HepG2 (cell line): ENCODE measurements at regions of chr5 and their contacts with region 1.

Region 1: GRCh38 chr5:74640450-74640953 is at the start of gene ENC1:
- DNase-seq: peak; percentile 95
- ATAC-seq: peak; percentile 83
- H3K4me3 ChIP-seq: peak within 1 kb of the TSS; percentile 92 to 100 (median 99)
- H3K27ac ChIP-seq: peak within 1 kb of the TSS; percentile 83
- H3K4me1 ChIP-seq: peaks cover 43% of the 10 kb centered on the region
- H3K27me3 ChIP-seq: no peaks in the 10 kb centered on the region; a peak in 2 of 5 replicates
- CTCF ChIP-seq: peak; percentile 68
- EP300 ChIP-seq: peak in 1 of 2 experiments; percentile 60; a peak in 2 of 4 replicates
- POLR2A ChIP-seq: peak in 1 of 2 experiments; percentile 98; a peak in 2 of 4 replicates
- RAD21 ChIP-seq: peak; percentile 80
- total RNA-seq, gene ENC1: 63.8 and 69.9 TPM in 2 replicates

Region 2: GRCh38 chr5:74290633-74291241 is 349.8 kb before region 1 on chr5:
- CTCF ChIA-PET with region 1: no interaction called
- POLR2A ChIA-PET with region 1: no interaction called
- in situ Hi-C with region 1: no loop called
- intact Hi-C with region 1: loop called (anchors 2 kb)
- DNase-seq: peak; percentile 7
- ATAC-seq: peak; percentile 71
- H3K4me3 ChIP-seq: no peak overlapping the region
- H3K27ac ChIP-seq: no peak overlapping the region
- H3K4me1 ChIP-seq: no peaks in the 10 kb centered on the region
- H3K27me3 ChIP-seq: no peaks in the 10 kb centered on the region; a peak in 2 of 5 replicates
- CTCF ChIP-seq: peak; percentile 56
- EP300 ChIP-seq: no peak
- POLR2A ChIP-seq: no peak
- RAD21 ChIP-seq: no peak

Region 3: DNA sequence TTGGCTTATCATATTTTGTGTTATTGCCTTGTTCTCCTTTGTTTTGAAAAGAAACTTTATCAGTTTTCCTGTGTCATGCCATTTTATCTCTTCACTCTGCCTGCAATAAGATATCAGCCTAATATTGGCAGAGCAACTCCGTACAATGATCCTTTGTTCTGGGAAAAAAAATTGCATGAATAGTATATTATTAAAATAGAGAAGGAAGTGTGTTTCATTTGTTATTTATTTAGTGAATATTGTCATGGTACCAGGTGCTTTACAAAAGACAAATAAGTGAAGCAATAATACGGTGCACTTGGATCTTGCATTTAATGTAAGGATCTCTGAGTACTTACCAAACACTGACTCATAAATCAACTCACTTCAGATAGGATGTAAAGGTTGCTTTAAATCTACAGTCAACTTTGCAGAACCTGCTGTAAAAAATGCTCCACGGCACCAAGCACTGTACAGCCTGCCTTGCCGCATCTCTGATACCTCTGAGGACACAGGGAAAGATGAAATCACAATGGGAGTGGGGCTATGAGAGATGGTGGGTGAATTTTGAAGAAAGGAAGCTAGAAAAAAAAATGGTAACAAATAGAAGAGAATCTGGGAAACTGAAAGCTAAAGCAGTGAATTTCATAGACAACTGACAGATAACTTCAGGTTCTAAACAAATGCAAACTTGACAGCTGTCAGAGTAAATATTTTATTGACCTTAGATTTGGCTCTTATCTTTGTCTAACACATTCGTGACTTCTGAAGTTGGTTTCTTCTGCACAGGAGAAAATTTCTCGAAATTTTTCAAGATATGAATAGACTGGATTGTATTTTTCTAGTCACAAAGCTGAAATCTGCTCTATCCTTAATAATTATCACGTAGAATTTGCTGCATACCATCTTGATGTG is 232.1 kb before region 1 on chr5:
- CTCF ChIA-PET with region 1: no interaction called
- POLR2A ChIA-PET with region 1: interaction called, 12 read pairs
- in situ Hi-C with region 1: no loop called
- intact Hi-C with region 1: loop called (anchors 2 kb)
- DNase-seq: peak; percentile 96
- ATAC-seq: peak; percentile 96
- H3K4me3 ChIP-seq: peak overlapping the region in 2 of 3 experiments; percentile 35 to 38; a peak in 2 of 6 replicates
- H3K27ac ChIP-seq: peak overlapping the region; percentile 66
- H3K4me1 ChIP-seq: peaks cover 66% of the 10 kb centered on the region
- H3K27me3 ChIP-seq: no peaks in the 10 kb centered on the region
- CTCF ChIP-seq: no peak
- EP300 ChIP-seq: peak; percentile 87 to 92; a peak in 3 of 4 replicates
- POLR2A ChIP-seq: no peak
- RAD21 ChIP-seq: 0 out of 2 replicates have a peak, but pooled peaks have one; percentile 17

Region 4: GRCh38 chr5:74490811-74491210 is 149.7 kb before region 1 on chr5:
- CTCF ChIA-PET with region 1: no interaction called
- POLR2A ChIA-PET with region 1: no interaction called
- in situ Hi-C with region 1: no loop called
- intact Hi-C with region 1: no loop called
- DNase-seq: no peak
- ATAC-seq: no peak
- H3K4me3 ChIP-seq: no peak overlapping the region
- H3K27ac ChIP-seq: no peak overlapping the region
- H3K4me1 ChIP-seq: peaks cover 23% of the 10 kb centered on the region
- H3K27me3 ChIP-seq: no peaks in the 10 kb centered on the region
- CTCF ChIP-seq: no peak
- EP300 ChIP-seq: no peak
- POLR2A ChIP-seq: no peak
- RAD21 ChIP-seq: no peak

Region 5: GRCh38 chr5:74510476-74511075 is 129.9 kb before region 1 on chr5:
- CTCF ChIA-PET with region 1: no interaction called
- POLR2A ChIA-PET with region 1: interaction called, 11 read pairs
- in situ Hi-C with region 1: no loop called
- intact Hi-C with region 1: no loop called
- DNase-seq: no peak
- ATAC-seq: no peak
- H3K4me3 ChIP-seq: no peak overlapping the region
- H3K27ac ChIP-seq: no peak overlapping the region
- H3K4me1 ChIP-seq: peaks cover 22% of the 10 kb centered on the region
- H3K27me3 ChIP-seq: no peaks in the 10 kb centered on the region
- CTCF ChIP-seq: no peak
- EP300 ChIP-seq: no peak
- POLR2A ChIP-seq: no peak
- RAD21 ChIP-seq: no peak

Region 6: DNA sequence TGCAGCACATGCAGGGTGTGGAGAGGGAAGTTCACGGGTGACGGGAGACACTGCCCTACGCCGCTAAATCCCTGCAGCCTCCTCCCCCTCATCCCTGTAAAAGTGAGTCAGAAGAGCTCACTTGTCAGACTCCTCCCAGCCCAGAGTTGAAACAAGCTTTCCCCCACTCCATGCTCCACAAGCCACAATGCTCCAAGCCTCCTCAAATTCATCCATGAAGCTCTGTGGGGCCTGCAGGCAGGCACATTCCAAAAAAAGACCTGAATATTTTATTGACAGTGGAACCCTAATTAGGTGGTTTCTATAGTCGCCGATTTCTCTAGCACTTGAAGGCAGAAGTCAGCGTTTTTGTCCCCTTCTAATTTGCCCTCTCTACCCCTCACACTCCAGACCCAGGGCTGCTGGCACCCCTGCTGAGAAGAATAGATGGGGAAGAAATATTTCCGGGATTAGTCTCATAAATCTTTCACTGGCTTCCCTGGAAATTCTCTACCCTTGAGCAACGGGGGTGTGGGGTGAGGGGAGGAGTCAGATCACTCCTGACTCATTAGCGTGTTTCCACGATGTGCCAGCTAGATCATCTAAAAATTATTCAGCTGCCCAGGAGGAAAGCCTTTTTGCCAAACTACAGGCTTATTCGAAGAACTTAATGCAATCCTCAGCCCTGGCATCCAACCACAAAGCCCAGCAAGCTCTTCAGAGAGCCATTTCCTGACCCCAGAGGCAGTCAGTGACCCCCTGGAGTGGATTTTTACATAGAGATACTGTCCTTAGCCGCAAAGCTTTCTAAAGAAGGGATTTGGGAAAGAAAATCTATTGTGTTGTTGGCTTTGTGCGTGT is 97.1 kb before region 1 on chr5:
- CTCF ChIA-PET with region 1: no interaction called
- POLR2A ChIA-PET with region 1: interaction called, 36 read pairs
- in situ Hi-C with region 1: no loop called
- intact Hi-C with region 1: loop called (anchors 5 kb)
- DNase-seq: no peak
- ATAC-seq: no peak
- H3K4me3 ChIP-seq: no peak overlapping the region
- H3K27ac ChIP-seq: no peak overlapping the region
- H3K4me1 ChIP-seq: peaks cover 55% of the 10 kb centered on the region
- H3K27me3 ChIP-seq: no peaks in the 10 kb centered on the region
- CTCF ChIP-seq: no peak
- EP300 ChIP-seq: no peak
- POLR2A ChIP-seq: no peak
- RAD21 ChIP-seq: no peak